ENCODE measurements at regions of chr12 and their contacts with region 1.

Region 1: GRCh38 chr12:121678716-121679580 is 9.5 kb upstream of the MORN3 start:
- DNase-seq: no peak
- ATAC-seq: no peak
- H3K4me3 ChIP-seq: no peak overlapping the region
- H3K27ac ChIP-seq: no peak overlapping the region
- H3K4me1 ChIP-seq: no peaks in the 10 kb centered on the region
- H3K27me3 ChIP-seq: no peaks in the 10 kb centered on the region
- CTCF ChIP-seq: no peak
- POLR2A ChIP-seq: no peak

Region 2: DNA sequence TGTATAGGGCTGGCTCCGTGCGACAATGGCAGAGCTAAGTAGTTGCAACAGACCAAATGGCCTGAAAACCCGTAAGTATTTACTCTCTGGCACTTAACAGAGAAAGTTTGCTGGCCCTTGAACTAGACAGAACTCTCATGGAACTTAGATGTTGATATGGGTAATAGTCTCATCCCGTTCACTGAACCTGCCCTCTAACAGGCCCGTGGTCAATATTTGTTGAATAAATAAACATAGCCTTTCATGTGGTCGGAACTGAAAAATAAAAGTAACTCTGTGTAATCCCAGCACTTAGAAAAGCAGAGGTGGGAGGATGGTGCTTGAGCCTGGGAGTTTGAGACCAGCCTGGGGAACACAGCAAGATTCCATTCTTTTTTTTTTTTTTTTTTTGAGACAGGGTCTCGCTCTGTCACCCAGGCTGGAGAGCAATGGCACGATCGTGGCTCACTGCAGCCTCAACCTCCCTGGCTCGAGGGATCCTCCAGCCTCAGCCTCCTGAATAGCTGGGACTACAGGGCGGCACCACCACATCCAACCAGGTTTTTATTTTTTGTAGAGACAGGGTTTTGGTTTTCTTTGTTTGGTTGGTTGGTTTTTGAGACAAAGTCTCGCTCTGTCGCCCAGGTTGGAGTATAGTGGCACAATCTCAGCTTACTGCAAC is 127.8 kb before region 1 on chr12:
- in situ Hi-C with region 1: loop called in 3 of 4 experiments (anchors 5 kb)
- intact Hi-C with region 1: loop called (anchors 1 kb)
- DNase-seq: no peak
- ATAC-seq: no peak
- H3K4me3 ChIP-seq: no peak overlapping the region
- H3K27ac ChIP-seq: no peak overlapping the region
- H3K4me1 ChIP-seq: peaks cover 3 to 4% of the 10 kb centered on the region in 2 donors
- H3K27me3 ChIP-seq: no peaks in the 10 kb centered on the region
- CTCF ChIP-seq: no peak
- POLR2A ChIP-seq: no peak

Region 3: DNA sequence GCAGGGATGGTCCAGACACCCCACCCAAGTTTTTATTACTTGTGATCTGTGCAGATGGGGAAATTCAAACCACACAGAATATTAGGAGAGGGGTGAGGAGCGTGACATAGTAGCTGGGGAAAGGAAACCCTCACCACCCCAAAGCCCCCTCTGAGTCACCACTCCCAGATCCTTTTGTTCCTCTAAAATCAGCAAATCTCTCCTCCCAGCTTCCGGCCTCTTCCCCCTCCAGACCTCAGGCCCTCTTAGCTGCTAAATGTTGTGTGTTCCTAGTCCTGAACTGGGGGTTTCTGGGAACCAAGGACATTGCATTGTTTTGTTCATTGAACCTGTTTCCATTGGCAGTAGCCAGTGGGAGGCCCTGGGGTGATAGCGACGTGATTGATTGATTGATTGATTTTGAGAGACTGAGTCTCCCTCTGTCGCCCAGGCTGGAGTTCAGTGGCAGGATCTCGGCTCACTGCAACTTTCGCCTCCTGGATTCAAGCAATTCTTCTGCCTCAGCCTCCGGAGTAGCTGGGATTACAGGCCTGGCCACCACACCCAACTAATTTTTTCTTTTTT is 58.5 kb before region 1 on chr12:
- in situ Hi-C with region 1: loop called in 1 of 4 experiments (anchors 5 kb)
- intact Hi-C with region 1: no loop called
- DNase-seq: no peak
- ATAC-seq: no peak
- H3K4me3 ChIP-seq: no peak overlapping the region
- H3K27ac ChIP-seq: no peak overlapping the region
- H3K4me1 ChIP-seq: peaks cover 3 to 6% of the 10 kb centered on the region in 2 donors
- H3K27me3 ChIP-seq: no peaks in the 10 kb centered on the region
- CTCF ChIP-seq: no peak
- POLR2A ChIP-seq: no peak

Measured in gastrocnemius medialis (tissue), 4 donors.